WTC11 (cell line): ENCODE measurements at regions of chr9 and their contacts with region 1.

Region 1: GRCh38 chr9:121286973-121287741 is 19.2 kb downstream of the GSN start:
- DNase-seq: peak; percentile 83
- ATAC-seq: peak; percentile 76
- H3K4me3 Mint-ChIP-seq: peak overlapping the region; percentile 49
- H3K27ac Mint-ChIP-seq: peak overlapping the region; percentile 17; the same call in 1 of the 2 replicates
- H3K4me1 Mint-ChIP-seq: peaks cover 45% of the 10 kb centered on the region
- H3K27me3 Mint-ChIP-seq: peaks cover 81% of the 10 kb centered on the region
- CTCF ChIP-seq: no peak

Region 2: DNA sequence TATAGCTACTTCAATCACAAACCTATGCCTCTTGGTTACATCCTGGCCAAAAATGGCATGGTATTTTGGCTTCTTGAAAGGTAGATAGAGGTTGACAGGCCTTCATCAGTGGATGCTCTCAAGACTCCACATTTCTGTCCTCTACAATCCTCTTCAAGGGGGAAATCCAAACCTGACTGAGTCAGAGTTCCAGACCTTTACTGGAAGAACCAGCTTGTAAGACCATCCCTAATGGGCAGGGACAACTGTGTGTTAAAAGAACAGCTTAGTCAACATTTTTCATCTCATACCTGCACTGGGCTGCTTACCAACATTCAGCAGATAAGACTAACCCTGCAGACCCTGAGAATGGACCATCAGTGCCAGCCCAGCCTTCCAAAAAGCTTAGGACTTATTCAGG is 862.9 kb before region 1 on chr9:
- CTCF ChIA-PET with region 1: no interaction called
- POLR2A ChIA-PET with region 1: no interaction called
- DNase-seq: no peak
- ATAC-seq: no peak
- H3K4me3 Mint-ChIP-seq: no peak overlapping the region
- H3K27ac Mint-ChIP-seq: no peak overlapping the region
- H3K4me1 Mint-ChIP-seq: peaks cover 31% of the 10 kb centered on the region
- H3K27me3 Mint-ChIP-seq: no peaks in the 10 kb centered on the region
- CTCF ChIP-seq: no peak

Region 3: GRCh38 chr9:121213136-121213806 is 73.9 kb before region 1 on chr9:
- CTCF ChIA-PET with region 1: interaction called, 16 read pairs
- POLR2A ChIA-PET with region 1: interaction called, 3 read pairs
- DNase-seq: peak; percentile 93
- ATAC-seq: peak; percentile 98
- H3K4me3 Mint-ChIP-seq: no peak overlapping the region
- H3K27ac Mint-ChIP-seq: no peak overlapping the region
- H3K4me1 Mint-ChIP-seq: peaks cover 10% of the 10 kb centered on the region
- H3K27me3 Mint-ChIP-seq: no peaks in the 10 kb centered on the region
- CTCF ChIP-seq: peak; percentile 84

Region 4: DNA sequence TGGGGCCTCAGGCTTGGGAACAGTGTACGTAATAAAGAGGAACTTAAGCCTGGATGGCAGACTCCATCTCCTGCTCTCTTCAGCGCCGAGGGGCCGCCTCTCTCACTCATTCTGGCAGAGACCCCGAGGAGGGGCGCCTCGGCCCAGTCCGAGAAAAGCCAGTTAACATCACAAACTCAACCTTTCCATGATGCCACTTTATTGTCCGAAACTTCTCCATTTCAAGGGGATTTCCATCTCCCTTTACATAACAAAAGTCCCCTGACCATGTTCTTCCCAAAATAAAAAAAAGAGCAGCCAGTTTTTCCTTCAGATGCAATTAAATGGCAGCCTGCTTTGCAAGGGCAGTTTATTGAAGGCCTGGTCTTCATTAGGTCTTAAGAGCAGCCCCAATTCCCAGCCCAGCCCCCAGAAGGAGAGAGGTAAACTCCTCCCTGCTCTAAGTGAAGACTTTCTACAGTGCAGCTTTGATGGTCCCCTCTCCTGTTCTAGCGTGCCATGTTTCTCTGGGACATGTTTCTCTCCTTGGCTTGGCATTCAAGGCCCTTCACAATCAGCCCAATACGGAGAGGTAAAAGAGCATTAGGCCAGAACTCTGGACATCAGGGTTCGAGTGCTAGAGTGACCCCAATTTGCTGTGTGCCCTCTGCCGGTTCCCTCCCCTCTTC is 66.0 kb before region 1 on chr9:
- CTCF ChIA-PET with region 1: interaction called, 10 read pairs
- POLR2A ChIA-PET with region 1: interaction called, 3 read pairs
- DNase-seq: peak; percentile 57
- ATAC-seq: peak; percentile 88
- H3K4me3 Mint-ChIP-seq: peak overlapping the region; percentile 57
- H3K27ac Mint-ChIP-seq: peak overlapping the region; percentile 96
- H3K4me1 Mint-ChIP-seq: peaks cover 37% of the 10 kb centered on the region
- H3K27me3 Mint-ChIP-seq: peaks cover 7% of the 10 kb centered on the region; the same call in 1 of the 2 replicates
- CTCF ChIP-seq: no peak

Region 5: DNA sequence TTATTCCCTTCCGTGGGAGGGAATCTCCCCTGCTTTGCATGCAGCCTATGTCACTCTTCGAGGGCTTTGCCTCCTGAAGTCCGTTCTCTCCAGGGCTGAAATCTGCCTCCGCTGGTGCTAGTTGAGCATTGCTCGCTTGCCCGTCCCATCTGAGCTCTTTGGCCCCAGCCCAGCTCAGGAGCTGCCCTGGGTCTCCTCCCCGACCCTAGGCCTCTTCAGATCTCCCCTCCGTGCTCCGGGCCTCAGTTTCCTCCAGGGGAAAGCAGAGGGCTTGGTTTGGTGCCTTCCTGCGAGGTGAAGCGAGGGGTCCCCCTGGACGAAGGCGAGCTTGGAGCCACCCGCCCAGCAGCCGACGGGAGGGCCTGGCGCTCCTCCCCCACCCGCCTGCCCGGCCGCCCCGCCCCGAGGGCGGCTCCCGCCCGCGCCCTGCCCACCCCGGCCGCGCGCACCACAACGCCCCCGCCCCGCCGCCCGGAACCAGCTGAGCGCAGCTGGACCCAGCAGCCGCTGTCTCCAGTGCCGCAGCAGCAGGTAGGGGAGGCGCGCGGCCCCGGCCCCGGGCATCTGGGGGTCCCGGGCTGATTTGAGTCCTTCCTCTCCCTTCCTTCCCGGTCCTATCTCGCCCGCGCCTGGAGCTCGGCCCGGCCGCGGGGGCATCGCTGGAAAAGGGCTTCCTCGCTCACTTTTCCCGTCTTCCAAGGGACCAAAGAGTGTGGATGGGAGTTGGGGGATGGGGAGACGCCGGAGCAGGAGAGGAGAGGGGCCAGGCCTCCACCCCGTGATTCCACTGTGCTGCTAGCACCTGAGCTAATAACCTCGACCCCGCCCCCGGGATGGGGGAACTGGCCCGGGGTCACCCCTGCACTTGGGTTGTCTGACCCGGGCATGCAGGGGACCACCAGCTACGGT is 19.2 kb before region 1 on chr9 and contains the start of gene GSN:
- CTCF ChIA-PET with region 1: interaction called, 35 read pairs
- POLR2A ChIA-PET with region 1: interaction called, 9 read pairs
- DNase-seq: peak; percentile 84
- ATAC-seq: peak; percentile 77
- H3K4me3 Mint-ChIP-seq: peak within 1 kb of the TSS; percentile 83
- H3K27ac Mint-ChIP-seq: peak within 1 kb of the TSS; percentile 41
- H3K4me1 Mint-ChIP-seq: peaks cover 51% of the 10 kb centered on the region
- H3K27me3 Mint-ChIP-seq: peaks cover 57% of the 10 kb centered on the region
- CTCF ChIP-seq: no peak
- total RNA-seq, gene GSN: 47.0 to 57.3 TPM (median 54.9 TPM) in 3 replicates

Region 6: DNA sequence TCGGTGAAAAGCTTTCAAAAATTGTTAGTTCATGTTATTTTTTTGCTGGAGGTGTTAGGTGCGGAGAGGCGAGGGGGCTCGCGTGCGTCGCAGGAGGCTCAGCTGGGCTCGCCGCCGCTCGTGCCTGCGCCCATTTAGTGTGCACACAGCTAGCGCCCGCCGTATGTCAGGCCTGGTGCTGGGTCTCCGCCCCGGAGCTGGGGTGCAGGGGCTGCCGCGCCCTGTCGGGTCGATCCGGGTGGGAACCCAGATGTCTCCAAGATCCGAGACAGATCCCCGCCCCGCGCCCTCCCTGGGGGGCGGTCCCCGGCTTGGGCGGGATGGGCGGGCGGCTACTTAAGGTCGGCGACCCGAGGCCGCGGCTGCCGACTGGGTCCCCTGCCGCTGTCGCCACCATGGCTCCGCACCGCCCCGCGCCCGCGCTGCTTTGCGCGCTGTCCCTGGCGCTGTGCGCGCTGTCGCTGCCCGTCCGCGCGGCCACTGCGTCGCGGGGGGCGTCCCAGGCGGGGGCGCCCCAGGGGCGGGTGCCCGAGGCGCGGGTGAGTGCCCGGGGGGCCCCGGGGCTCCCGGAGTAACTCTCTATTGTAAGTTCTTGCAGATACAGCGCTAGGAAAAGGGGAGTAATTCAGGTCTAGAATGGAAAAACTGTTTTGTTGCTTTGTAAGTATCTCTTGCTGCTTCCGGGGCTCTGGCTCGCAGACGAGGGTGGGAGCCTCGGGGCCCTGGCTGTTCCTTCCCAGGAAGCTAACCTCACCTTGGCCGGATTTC is 12.5 kb after region 1 on chr9:
- CTCF ChIA-PET with region 1: interaction called, 27 read pairs
- POLR2A ChIA-PET with region 1: interaction called, 3 read pairs
- DNase-seq: peak; percentile 23
- ATAC-seq: peak; percentile 56
- H3K4me3 Mint-ChIP-seq: peak overlapping the region; percentile 74
- H3K27ac Mint-ChIP-seq: no peak overlapping the region
- H3K4me1 Mint-ChIP-seq: peaks cover 23% of the 10 kb centered on the region
- H3K27me3 Mint-ChIP-seq: peaks cover 21% of the 10 kb centered on the region
- CTCF ChIP-seq: no peak

Region 7: GRCh38 chr9:121305269-121305994 is 18.3 kb after region 1 on chr9:
- CTCF ChIA-PET with region 1: interaction called, 10 read pairs
- POLR2A ChIA-PET with region 1: no interaction called
- DNase-seq: no peak
- ATAC-seq: no peak
- H3K4me3 Mint-ChIP-seq: no peak overlapping the region
- H3K27ac Mint-ChIP-seq: no peak overlapping the region
- H3K4me1 Mint-ChIP-seq: peaks cover 3% of the 10 kb centered on the region
- H3K27me3 Mint-ChIP-seq: peaks cover 11% of the 10 kb centered on the region
- CTCF ChIP-seq: no peak